ENCODE measurements at regions of chr12 and their contacts with region 1.

Region 1: GRCh38 chr12:7933255-7933729 is 2.7 kb downstream of the SLC2A3 start:
- DNase-seq: peak; percentile 84
- H3K4me3 Mint-ChIP-seq: no peak overlapping the region
- H3K27ac Mint-ChIP-seq: no peak overlapping the region
- H3K4me1 Mint-ChIP-seq: peaks cover 37% of the 10 kb centered on the region
- H3K27me3 Mint-ChIP-seq: no peaks in the 10 kb centered on the region

Region 2: DNA sequence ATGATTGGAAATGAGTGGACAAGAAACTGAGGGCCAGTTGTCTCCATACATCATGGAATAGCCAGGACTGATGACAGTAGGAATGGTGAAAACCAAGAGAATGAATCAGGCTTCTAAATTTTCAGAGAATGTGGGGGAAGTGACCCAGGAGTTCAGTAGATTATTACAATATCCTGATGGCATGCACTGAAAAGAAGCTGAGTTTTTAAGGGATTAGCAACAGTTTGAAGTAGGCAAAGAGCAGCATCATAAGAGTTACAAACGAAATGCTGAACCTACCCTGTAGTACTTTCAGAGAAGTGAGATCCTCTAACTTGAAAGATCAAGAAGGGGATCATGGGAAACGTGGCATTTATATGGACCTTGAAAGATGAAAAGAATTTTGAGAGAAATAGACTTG is 73.7 kb before region 1 on chr12:
- CTCF ChIA-PET with region 1: interaction called, 19 read pairs
- DNase-seq: no peak
- H3K4me3 Mint-ChIP-seq: no peak overlapping the region
- H3K27ac Mint-ChIP-seq: no peak overlapping the region
- H3K4me1 Mint-ChIP-seq: peaks cover 11% of the 10 kb centered on the region
- H3K27me3 Mint-ChIP-seq: peaks cover 33% of the 10 kb centered on the region

Region 3: DNA sequence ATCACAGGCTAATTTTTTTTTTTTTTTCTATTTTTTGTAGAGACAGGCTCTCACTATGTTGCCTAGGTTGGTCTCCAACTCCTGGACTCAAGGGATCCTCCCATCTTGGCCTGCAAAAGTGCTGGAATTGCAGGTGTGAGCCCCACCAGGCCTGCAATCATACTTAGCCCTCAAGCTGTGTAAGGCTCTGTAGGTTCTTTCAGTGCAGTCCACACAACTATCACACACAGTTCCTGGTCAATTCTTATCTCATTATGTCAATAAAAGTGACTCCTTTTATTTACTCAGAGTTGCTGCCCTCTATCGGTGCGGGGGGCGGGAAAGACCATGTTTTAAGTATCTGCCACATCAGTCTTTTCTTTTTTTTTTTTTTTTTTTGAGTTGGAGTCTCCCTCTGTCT is 26.3 kb before region 1 on chr12:
- CTCF ChIA-PET with region 1: no interaction called
- DNase-seq: peak; percentile 35
- H3K4me3 Mint-ChIP-seq: no peak overlapping the region
- H3K27ac Mint-ChIP-seq: no peak overlapping the region
- H3K4me1 Mint-ChIP-seq: no peaks in the 10 kb centered on the region
- H3K27me3 Mint-ChIP-seq: peaks cover 7% of the 10 kb centered on the region

Region 4: DNA sequence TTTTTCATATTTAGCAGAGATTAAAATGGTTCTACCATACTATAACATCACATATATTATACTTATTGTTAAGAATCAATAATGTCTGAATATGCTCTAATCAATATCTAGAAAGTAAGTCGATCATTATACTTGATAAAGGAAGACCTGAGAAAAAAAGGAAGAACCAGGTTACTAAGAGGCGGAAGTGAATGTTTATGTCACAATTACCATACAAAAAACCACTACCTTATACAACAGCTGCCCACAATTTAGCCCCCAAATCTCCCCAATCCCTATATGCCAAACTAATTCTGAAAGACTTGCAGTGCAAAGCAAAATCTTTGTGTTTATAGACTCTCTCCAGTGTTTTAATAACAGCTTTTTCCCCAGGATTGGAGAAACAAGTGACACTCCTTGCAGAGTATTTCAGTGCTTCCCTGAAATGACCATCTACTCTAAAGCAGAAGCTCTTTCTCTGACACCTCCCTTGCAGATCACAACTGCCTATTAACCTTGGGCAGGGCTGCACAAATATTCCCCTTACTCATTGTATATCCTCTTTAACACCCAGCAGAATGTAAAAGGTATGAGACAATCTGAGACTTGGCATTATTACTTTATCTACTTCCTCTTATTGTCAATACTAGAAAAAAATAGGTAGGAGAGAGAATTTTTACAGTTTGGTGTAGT is 15.4 kb after region 1 on chr12:
- CTCF ChIA-PET with region 1: no interaction called
- DNase-seq: no peak
- H3K4me3 Mint-ChIP-seq: no peak overlapping the region
- H3K27ac Mint-ChIP-seq: no peak overlapping the region
- H3K4me1 Mint-ChIP-seq: peaks cover 7% of the 10 kb centered on the region
- H3K27me3 Mint-ChIP-seq: no peaks in the 10 kb centered on the region

Region 5: GRCh38 chr12:7970475-7971252 is 37.4 kb after region 1 on chr12:
- CTCF ChIA-PET with region 1: interaction called, 260 read pairs
- DNase-seq: peak; percentile 91
- H3K4me3 Mint-ChIP-seq: peak overlapping the region; percentile 75
- H3K27ac Mint-ChIP-seq: peak overlapping the region; percentile 96
- H3K4me1 Mint-ChIP-seq: peaks cover 49% of the 10 kb centered on the region
- H3K27me3 Mint-ChIP-seq: no peaks in the 10 kb centered on the region

Region 6: DNA sequence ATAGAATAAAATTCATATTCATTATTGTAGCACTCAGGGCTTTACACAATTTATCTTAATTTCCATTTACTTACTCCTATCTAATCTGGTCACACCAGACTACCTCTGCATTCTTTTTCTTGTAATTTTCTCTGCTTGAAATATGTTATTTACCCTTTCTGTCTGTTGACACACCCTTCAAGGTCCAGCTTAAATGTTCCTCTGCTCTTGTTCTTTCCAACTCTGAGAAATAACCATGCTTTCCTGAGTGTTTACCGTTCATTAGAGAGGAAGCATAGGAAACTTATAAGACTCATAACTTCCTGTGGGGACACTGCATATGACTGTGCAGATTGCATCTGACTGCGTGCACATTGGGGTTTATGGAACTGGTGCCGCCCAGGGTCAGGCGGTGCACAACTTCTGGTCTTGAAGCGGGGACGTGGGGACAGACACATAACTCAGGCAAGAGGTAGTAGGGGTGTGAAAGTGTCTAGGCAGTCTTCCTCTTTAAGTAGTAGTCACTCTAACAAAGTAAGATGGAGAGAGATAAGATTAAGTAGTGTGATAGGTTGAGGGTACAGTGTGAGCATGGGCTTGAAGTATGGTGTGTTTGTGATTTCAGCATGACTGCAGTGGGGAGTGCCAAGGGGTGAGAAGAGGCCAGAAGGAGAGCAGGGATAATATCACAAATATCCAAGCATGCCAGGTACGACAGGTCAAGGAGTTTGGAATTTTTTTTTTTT is 56.7 kb after region 1 on chr12:
- CTCF ChIA-PET with region 1: interaction called, 86 read pairs
- DNase-seq: peak; percentile 79
- H3K4me3 Mint-ChIP-seq: peak overlapping the region; percentile 14
- H3K27ac Mint-ChIP-seq: peak overlapping the region; percentile 89
- H3K4me1 Mint-ChIP-seq: peaks cover 48% of the 10 kb centered on the region
- H3K27me3 Mint-ChIP-seq: no peaks in the 10 kb centered on the region

Region 7: DNA sequence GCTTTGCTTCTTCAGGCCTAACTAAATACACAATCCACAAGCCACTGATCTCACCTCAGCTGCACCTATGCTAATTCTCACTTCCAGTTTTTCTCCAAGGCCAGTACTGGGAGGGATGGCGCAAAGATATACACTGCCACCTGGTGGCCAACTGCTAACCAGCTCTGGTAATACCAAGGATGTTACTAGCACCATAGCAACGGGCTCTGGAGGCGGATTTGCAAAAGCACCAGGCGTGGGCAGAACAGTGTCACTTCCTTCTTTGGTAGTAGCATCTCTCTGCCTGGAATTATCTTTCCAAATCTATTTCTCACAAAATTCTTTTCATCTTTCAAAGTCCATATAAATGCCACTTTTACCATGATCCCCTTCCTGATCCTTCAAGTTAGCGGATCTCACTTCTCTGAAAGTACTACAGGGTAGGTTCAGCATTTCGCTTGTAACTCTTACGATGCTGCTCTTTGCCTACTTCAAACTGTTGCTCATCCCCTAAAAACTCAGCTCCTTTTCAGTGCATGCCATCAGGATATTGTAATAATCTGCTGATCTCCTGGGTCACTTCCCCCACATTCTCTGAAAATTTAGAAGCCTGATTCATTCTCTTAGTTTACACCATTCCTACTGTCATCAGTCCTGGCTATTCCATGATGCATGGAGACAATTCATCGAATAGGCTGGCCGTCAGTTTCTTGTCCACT is 62.1 kb after region 1 on chr12:
- CTCF ChIA-PET with region 1: interaction called, 86 read pairs
- DNase-seq: peak; percentile 88
- H3K4me3 Mint-ChIP-seq: no peak overlapping the region
- H3K27ac Mint-ChIP-seq: no peak overlapping the region
- H3K4me1 Mint-ChIP-seq: peaks cover 23% of the 10 kb centered on the region
- H3K27me3 Mint-ChIP-seq: peaks cover 3% of the 10 kb centered on the region

Region 8: DNA sequence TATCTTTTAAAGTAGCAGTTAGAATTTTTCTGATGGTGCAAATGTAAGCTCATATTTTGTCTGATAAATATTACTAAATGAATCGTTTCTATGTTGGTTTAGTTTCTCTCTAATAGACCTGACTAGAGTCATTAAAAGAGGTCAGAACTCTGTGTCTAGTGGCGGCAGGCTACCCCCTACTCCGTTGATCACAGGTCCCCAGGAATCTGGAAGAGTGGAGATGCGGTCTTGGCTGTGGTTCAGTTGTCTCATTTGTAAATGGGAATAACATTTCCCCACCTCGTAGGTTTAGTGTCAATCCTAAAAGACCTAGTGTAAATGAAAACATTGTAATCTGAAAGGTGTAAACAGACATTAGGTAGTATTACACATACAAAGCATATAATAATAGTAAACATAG is 94.6 kb after region 1 on chr12:
- CTCF ChIA-PET with region 1: no interaction called
- DNase-seq: no peak
- H3K4me3 Mint-ChIP-seq: peak overlapping the region; percentile 84
- H3K27ac Mint-ChIP-seq: peak overlapping the region; percentile 98
- H3K4me1 Mint-ChIP-seq: peaks cover 22% of the 10 kb centered on the region
- H3K27me3 Mint-ChIP-seq: no peaks in the 10 kb centered on the region

Region 9: DNA sequence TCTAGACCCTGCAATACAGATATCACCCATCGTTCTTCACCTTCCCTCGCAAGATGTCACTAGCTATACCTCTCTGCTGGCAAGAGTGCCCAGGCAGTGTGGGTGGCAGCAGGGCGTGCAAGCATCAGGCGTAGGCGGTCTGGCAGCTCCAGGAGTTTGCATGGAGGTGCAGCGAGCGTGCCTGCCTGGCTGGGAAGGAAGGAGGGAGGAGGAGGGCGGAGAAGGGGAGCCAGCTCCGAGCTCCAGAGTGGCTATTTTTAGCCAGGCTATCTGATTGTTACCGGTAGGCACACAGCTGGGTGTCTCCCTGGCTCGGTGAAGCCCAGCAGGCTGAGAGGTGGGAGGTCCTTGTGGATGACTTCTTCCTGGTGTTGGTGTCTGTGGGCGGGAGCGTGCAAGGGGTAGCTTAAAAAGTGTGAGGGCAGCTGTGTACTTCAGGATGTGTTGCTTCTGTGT is 105.4 kb after region 1 on chr12:
- CTCF ChIA-PET with region 1: interaction called, 10 read pairs
- DNase-seq: peak; percentile 63
- H3K4me3 Mint-ChIP-seq: peak overlapping the region; percentile 35
- H3K27ac Mint-ChIP-seq: no peak overlapping the region
- H3K4me1 Mint-ChIP-seq: peaks cover 54% of the 10 kb centered on the region
- H3K27me3 Mint-ChIP-seq: no peaks in the 10 kb centered on the region

Measured in activated naive CD4-positive, alpha-beta T cell treated with anti-CD3 and anti-CD28 coated beads, Interleukin-2, amount 10 ng/mL, durations not matched to agents 7 days and 5 days (primary cell).